GM12878 (cell line): ENCODE measurements at regions of chr4 and their contacts with region 1.

Region 1: DNA sequence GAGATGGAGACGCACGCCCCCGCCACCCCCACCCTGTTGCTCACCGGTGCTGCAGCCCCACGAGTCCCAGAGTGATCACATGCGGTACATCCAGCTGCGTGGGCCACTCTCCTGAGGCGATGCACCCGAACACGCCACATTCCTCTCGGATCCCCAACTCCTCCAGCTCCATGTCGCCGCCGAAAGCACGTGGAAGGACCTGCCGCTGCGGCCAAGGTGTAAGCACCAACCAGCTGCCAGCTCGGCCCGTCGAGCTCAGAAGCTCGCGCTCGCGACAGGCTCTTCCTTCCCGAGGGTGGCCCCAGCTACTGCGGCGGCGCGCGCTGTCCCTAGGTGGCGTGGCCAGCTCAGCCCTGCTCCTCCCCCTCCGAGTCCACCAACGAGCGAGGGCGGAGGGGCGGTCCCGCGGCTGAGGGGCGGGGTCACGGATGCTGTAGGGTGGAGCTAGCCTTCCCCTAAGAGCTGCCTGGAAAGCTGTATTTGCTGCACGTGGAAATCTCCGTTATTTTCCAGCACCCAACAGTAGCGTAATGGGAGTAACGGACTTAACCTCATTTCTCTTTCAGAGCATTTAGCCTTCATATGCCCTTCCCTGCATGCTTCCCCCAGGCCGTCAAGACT is at the start of gene PPAT:
- DNase-seq: peak; percentile 94
- ATAC-seq: peak; percentile 81
- H3K4me3 ChIP-seq: peak within 1 kb of the TSS; percentile 90
- H3K27ac ChIP-seq: peak within 1 kb of the TSS; percentile 98
- H3K4me1 ChIP-seq: no peaks in the 10 kb centered on the region
- H3K27me3 ChIP-seq: no peaks in the 10 kb centered on the region
- CTCF ChIP-seq: peak in 2 of 3 experiments; percentile 7 to 15; a peak in 3 of 6 replicates
- EP300 ChIP-seq: no peak
- POLR2A ChIP-seq: peak; percentile 94
- RAD21 ChIP-seq: no peak
- polyA plus RNA-seq, gene PPAT: 24.9 to 32.6 TPM

Region 2: GRCh38 chr4:55546756-55547465 is 888.5 kb before region 1 on chr4 and contains the start of gene CLOCK:
- CTCF ChIA-PET with region 1: no interaction called
- POLR2A ChIA-PET with region 1: interaction called, 3 read pairs
- RAD21 ChIA-PET with region 1: no interaction called
- SMC1A ChIA-PET with region 1: no interaction called
- in situ Hi-C with region 1: no loop called
- intact Hi-C with region 1: loop called (anchors 10 kb)
- DNase-seq: no peak
- ATAC-seq: peak; percentile 84
- H3K4me3 ChIP-seq: peak within 1 kb of the TSS; percentile 80
- H3K27ac ChIP-seq: peak within 1 kb of the TSS; percentile 88
- H3K4me1 ChIP-seq: no peaks in the 10 kb centered on the region
- H3K27me3 ChIP-seq: no peaks in the 10 kb centered on the region
- CTCF ChIP-seq: peak; percentile 32 to 52 (median 33); a peak in 5 of 6 replicates
- EP300 ChIP-seq: no peak
- POLR2A ChIP-seq: peak; percentile 74
- RAD21 ChIP-seq: no peak
- polyA plus RNA-seq, gene CLOCK: 2.8 to 3.5 TPM

Region 3: GRCh38 chr4:56372774-56373173 is 62.6 kb before region 1 on chr4:
- CTCF ChIA-PET with region 1: no interaction called
- POLR2A ChIA-PET with region 1: no interaction called
- RAD21 ChIA-PET with region 1: no interaction called
- SMC1A ChIA-PET with region 1: no interaction called
- in situ Hi-C with region 1: no loop called
- intact Hi-C with region 1: no loop called
- DNase-seq: no peak
- ATAC-seq: no peak
- H3K4me3 ChIP-seq: no peak overlapping the region
- H3K27ac ChIP-seq: no peak overlapping the region
- H3K4me1 ChIP-seq: no peaks in the 10 kb centered on the region
- H3K27me3 ChIP-seq: no peaks in the 10 kb centered on the region
- CTCF ChIP-seq: no peak
- EP300 ChIP-seq: no peak
- POLR2A ChIP-seq: no peak
- RAD21 ChIP-seq: no peak

Region 4: DNA sequence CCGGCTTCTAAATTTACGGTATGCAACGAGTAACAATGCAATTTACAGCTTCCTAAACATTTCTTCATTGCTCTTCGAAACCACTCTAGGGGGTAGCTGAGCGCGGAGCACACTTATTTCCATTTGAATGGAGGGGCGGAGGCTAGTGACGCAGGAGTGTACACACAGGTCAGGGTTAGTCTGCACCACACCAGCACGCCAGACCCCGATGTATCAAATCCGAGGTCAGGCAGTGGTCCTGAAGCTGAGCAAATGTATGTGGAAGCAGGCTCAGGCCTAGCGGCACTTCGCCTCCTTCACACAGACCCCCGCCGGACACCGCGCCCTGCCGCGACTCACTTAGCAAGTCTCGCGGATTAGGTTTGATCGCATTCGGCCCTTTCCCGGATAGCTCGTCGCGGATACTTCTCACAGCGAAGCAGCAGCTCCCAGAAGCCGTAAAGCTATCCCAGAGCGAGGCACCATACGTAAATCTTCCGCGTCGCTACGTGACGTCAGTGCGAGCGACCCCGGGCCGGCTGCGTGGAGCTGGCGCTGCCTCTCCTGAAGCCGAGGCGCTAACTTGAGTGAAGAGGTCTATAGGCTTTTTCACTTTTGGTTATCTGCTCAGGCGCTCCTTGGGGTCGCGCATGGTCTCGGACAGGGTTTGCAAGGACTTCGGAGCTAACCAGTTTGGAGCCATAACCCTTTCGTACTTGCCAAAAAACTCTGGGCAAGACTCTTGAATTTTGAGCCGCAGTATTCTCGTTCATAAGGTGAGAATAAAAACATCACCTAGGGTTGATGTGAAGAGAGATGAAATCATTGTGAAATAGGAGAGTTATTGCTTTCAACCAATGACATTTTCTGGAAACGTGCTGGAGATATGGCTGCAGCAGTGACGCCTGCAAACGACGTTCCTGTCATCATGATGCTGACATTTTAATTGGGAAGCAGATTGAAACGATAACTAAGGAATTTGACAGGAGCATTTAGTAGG is 48.1 kb before region 1 on chr4 and contains the start of gene AASDH:
- CTCF ChIA-PET with region 1: interaction called, 3 read pairs
- POLR2A ChIA-PET with region 1: interaction called, 26 read pairs
- RAD21 ChIA-PET with region 1: interaction called, 20 read pairs
- SMC1A ChIA-PET with region 1: interaction called, 14 read pairs
- in situ Hi-C with region 1: no loop called
- intact Hi-C with region 1: loop called (anchors 2 kb)
- DNase-seq: peak; percentile 87
- ATAC-seq: peak; percentile 96
- H3K4me3 ChIP-seq: peak within 1 kb of the TSS; percentile 83
- H3K27ac ChIP-seq: peak within 1 kb of the TSS; percentile 90
- H3K4me1 ChIP-seq: peaks cover 5% of the 10 kb centered on the region
- H3K27me3 ChIP-seq: no peaks in the 10 kb centered on the region
- CTCF ChIP-seq: no peak
- EP300 ChIP-seq: no peak
- POLR2A ChIP-seq: peak; percentile 97
- RAD21 ChIP-seq: no peak
- polyA plus RNA-seq, gene AASDH: 11.6 to 19.1 TPM

Region 5: GRCh38 chr4:56460085-56460484 is 24.7 kb after region 1 on chr4:
- CTCF ChIA-PET with region 1: interaction called, 7 read pairs
- POLR2A ChIA-PET with region 1: interaction called, 4 read pairs
- RAD21 ChIA-PET with region 1: interaction called, 19 read pairs
- SMC1A ChIA-PET with region 1: interaction called, 13 read pairs
- in situ Hi-C with region 1: no loop called
- intact Hi-C with region 1: no loop called
- DNase-seq: no peak
- ATAC-seq: no peak
- H3K4me3 ChIP-seq: no peak overlapping the region
- H3K27ac ChIP-seq: no peak overlapping the region
- H3K4me1 ChIP-seq: no peaks in the 10 kb centered on the region
- H3K27me3 ChIP-seq: no peaks in the 10 kb centered on the region
- CTCF ChIP-seq: no peak
- EP300 ChIP-seq: no peak
- POLR2A ChIP-seq: no peak
- RAD21 ChIP-seq: no peak

Region 6: GRCh38 chr4:56575820-56576429 is 140.5 kb after region 1 on chr4:
- CTCF ChIA-PET with region 1: no interaction called
- POLR2A ChIA-PET with region 1: no interaction called
- RAD21 ChIA-PET with region 1: no interaction called
- SMC1A ChIA-PET with region 1: no interaction called
- in situ Hi-C with region 1: no loop called
- intact Hi-C with region 1: no loop called
- DNase-seq: no peak
- ATAC-seq: no peak
- H3K4me3 ChIP-seq: no peak overlapping the region
- H3K27ac ChIP-seq: no peak overlapping the region
- H3K4me1 ChIP-seq: no peaks in the 10 kb centered on the region
- H3K27me3 ChIP-seq: no peaks in the 10 kb centered on the region
- CTCF ChIP-seq: peak; percentile 18 to 31 (median 23); a peak in 3 of 6 replicates
- EP300 ChIP-seq: no peak
- POLR2A ChIP-seq: no peak
- RAD21 ChIP-seq: peak; percentile 59

Region 7: GRCh38 chr4:56907489-56908205 is 472.2 kb after region 1 on chr4 and contains the start of gene REST:
- CTCF ChIA-PET with region 1: no interaction called
- POLR2A ChIA-PET with region 1: no interaction called
- RAD21 ChIA-PET with region 1: no interaction called
- SMC1A ChIA-PET with region 1: no interaction called
- in situ Hi-C with region 1: no loop called
- intact Hi-C with region 1: loop called (anchors 5 kb)
- DNase-seq: no peak
- ATAC-seq: peak; percentile 67
- H3K4me3 ChIP-seq: peak within 1 kb of the TSS; percentile 91
- H3K27ac ChIP-seq: peak within 1 kb of the TSS; percentile 92
- H3K4me1 ChIP-seq: peaks cover 8% of the 10 kb centered on the region; the same call in 1 of the 2 replicates
- H3K27me3 ChIP-seq: no peaks in the 10 kb centered on the region
- CTCF ChIP-seq: no peak
- EP300 ChIP-seq: no peak
- POLR2A ChIP-seq: peak; percentile 77
- RAD21 ChIP-seq: no peak
- polyA plus RNA-seq, gene REST: 3.7 to 8.5 TPM